OCI-LY7 (cell line): ENCODE measurements at regions of chr2 and their contacts with region 1.

Region 1: GRCh38 chr2:33033606-33034081 is 86.9 kb downstream of the LTBP1 start:
- DNase-seq: peak; percentile 69
- H3K4me3 ChIP-seq: no peak overlapping the region
- H3K27ac ChIP-seq: no peak overlapping the region
- H3K4me1 ChIP-seq: peaks cover 26% of the 10 kb centered on the region
- CTCF ChIP-seq: peak; percentile 87

Region 2: DNA sequence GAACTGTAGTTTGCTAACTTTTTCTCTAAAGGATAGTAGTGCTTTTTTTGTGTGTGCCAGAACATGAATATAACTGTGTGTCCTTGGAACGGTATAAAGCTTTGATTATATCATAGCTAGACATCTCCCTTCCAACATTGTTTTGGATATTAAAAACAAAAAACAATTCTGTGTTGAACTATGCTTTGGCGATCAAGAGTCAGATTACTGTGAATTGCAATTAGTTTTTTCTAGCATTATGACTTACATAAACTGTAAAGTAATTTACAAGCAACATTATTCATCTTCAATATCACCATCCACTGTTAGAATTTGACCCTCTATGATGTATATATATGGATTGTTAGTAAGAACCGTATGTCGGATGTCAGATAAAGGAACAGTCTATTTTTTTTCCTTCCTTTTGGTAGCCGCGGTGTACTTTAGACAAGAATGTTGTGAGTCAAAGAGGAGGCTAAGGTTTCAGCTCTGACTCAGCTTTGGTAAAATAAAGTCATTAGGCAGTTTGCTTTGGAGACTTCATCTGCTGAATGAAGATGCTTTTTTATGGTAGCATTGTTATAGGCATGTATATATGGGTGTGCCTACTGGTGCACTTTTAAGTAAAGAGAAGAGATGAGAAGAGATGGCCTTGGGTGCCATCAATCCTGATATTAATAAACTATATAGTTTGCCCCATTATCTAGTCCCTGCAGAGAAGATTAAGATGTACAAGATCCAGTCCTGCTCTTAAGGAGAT is 10.5 kb before region 1 on chr2:
- CTCF ChIA-PET with region 1: interaction called, 3 read pairs
- POLR2A ChIA-PET with region 1: interaction called, 33 read pairs
- intact Hi-C with region 1: no loop called
- DNase-seq: no peak
- H3K4me3 ChIP-seq: no peak overlapping the region
- H3K27ac ChIP-seq: no peak overlapping the region
- H3K4me1 ChIP-seq: no peaks in the 10 kb centered on the region
- CTCF ChIP-seq: no peak

Region 3: DNA sequence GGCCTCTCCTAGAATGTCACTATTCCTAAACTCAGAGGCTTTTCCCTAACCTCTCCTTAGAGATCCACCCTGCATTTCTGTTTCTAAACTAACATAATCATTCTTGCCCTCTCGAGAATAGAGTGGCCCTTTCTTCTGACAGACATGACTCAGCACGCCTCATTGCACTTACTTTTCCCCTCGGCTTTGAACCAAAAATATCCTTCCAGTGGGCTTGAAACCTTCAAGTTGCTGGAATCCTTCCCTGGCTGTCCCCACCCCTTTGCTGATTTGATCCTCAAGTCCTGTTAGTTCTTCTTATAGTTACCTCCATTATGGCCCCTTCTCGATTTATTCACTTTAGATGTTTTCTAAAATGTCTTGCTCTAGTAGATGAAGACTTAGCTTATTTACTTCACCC is 71.1 kb after region 1 on chr2:
- CTCF ChIA-PET with region 1: no interaction called
- POLR2A ChIA-PET with region 1: no interaction called
- intact Hi-C with region 1: no loop called
- DNase-seq: no peak
- H3K4me3 ChIP-seq: no peak overlapping the region
- H3K27ac ChIP-seq: no peak overlapping the region
- H3K4me1 ChIP-seq: no peaks in the 10 kb centered on the region
- CTCF ChIP-seq: no peak

Region 4: DNA sequence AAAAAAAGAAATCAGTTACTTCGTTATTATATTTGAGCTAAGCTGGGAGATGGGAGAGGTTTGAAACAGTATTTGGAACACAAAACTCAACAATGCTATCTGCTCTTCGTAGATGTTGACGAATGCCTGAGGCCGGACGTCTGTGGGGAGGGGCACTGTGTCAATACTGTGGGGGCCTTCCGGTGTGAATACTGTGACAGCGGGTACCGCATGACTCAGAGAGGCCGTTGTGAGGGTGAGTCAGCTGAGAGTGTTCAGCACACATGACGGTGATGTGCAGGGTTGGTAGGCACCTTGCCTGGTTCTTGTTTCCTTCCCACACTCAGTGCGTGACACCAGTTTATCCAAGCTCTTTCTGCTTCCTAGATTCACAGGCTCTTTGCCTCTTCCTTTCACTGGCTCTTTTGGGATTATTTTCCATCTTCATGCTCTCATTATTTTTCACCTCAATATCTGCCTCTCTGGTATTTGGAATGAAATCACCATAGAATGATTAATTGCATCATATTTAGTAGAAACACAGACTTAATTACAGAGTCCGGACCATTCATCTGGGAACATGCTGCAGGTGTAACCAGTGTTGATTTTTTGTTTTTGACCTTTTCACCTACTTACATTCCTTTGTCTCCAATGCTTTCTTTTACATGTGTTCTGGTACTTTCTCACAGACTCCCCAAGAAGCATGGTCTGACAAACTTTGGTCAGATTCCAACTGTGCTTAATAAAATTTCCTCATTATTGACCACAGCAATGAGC is 242.2 kb after region 1 on chr2:
- CTCF ChIA-PET with region 1: no interaction called
- POLR2A ChIA-PET with region 1: no interaction called
- intact Hi-C with region 1: loop called (anchors 5 kb)
- DNase-seq: no peak
- H3K4me3 ChIP-seq: no peak overlapping the region
- H3K27ac ChIP-seq: no peak overlapping the region
- H3K4me1 ChIP-seq: peaks cover 26% of the 10 kb centered on the region
- CTCF ChIP-seq: no peak

Region 5: GRCh38 chr2:33372940-33373553 is 339.4 kb after region 1 on chr2:
- CTCF ChIA-PET with region 1: no interaction called
- POLR2A ChIA-PET with region 1: no interaction called
- intact Hi-C with region 1: loop called (anchors 5 kb)
- DNase-seq: peak; percentile 63
- H3K4me3 ChIP-seq: no peak overlapping the region
- H3K27ac ChIP-seq: no peak overlapping the region
- H3K4me1 ChIP-seq: no peaks in the 10 kb centered on the region
- CTCF ChIP-seq: peak; percentile 96